Activated CD8-positive, alpha-beta T cell treated with anti-CD3 and anti-CD28 coated beads for 36 hours (primary cell): ENCODE measurements at regions of chr20 and their contacts with region 1.

Region 1: GRCh38 chr20:45771182-45771759 is 20.4 kb downstream of the WFDC3 start:
- DNase-seq: peak; percentile 87
- ATAC-seq: peak; percentile 85
- H3K4me3 Mint-ChIP-seq: no peak overlapping the region
- H3K27ac Mint-ChIP-seq: no peak overlapping the region
- H3K4me1 Mint-ChIP-seq: peaks cover 6% of the 10 kb centered on the region
- H3K27me3 Mint-ChIP-seq: peaks cover 8% of the 10 kb centered on the region
- CTCF ChIP-seq: peak; percentile 85

Region 2: GRCh38 chr20:45293041-45294002 is 477.9 kb before region 1 on chr20:
- CTCF ChIA-PET with region 1: interaction called, 12 read pairs
- POLR2A ChIA-PET with region 1: interaction called, 3 read pairs
- intact Hi-C with region 1: no loop called
- DNase-seq: peak; percentile 91
- ATAC-seq: peak; percentile 92
- H3K4me3 Mint-ChIP-seq: peak overlapping the region; percentile 69
- H3K27ac Mint-ChIP-seq: no peak overlapping the region
- H3K4me1 Mint-ChIP-seq: peaks cover 2% of the 10 kb centered on the region
- H3K27me3 Mint-ChIP-seq: peaks cover 31% of the 10 kb centered on the region
- CTCF ChIP-seq: peak; percentile 98

Region 3: GRCh38 chr20:45373353-45374100 is 397.7 kb before region 1 on chr20:
- CTCF ChIA-PET with region 1: interaction called, 17 read pairs
- POLR2A ChIA-PET with region 1: no interaction called
- intact Hi-C with region 1: no loop called
- DNase-seq: peak; percentile 93
- ATAC-seq: peak; percentile 93
- H3K4me3 Mint-ChIP-seq: peak overlapping the region; percentile 77
- H3K27ac Mint-ChIP-seq: peak overlapping the region; percentile 83
- H3K4me1 Mint-ChIP-seq: peaks cover 29% of the 10 kb centered on the region
- H3K27me3 Mint-ChIP-seq: no peaks in the 10 kb centered on the region
- CTCF ChIP-seq: peak; percentile 96

Region 4: DNA sequence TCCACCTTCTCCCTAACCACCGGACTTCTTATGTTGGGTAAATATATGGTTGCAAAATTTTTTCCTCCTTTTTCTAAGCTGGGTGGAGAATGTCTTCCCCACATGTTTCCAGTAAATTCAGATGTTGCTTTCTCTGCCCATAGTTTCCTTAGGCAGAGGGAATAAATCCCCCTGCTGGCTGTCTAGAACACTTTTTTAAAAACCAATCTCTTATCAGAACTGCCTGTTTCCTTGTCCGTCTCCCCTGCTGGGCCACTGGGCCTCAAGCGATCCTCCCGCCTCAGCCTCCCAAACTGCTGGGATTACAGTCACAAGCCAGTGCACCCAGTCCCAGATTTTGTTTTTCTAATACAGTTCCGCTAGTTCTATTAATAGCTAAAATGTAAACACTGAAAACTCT is 311.7 kb before region 1 on chr20:
- CTCF ChIA-PET with region 1: interaction called, 53 read pairs
- POLR2A ChIA-PET with region 1: no interaction called
- intact Hi-C with region 1: no loop called
- DNase-seq: no peak
- ATAC-seq: no peak
- H3K4me3 Mint-ChIP-seq: no peak overlapping the region
- H3K27ac Mint-ChIP-seq: no peak overlapping the region
- H3K4me1 Mint-ChIP-seq: peaks cover 4% of the 10 kb centered on the region
- H3K27me3 Mint-ChIP-seq: no peaks in the 10 kb centered on the region
- CTCF ChIP-seq: no peak

Region 5: GRCh38 chr20:45545754-45546453 is 225.4 kb before region 1 on chr20:
- CTCF ChIA-PET with region 1: interaction called, 13 read pairs
- POLR2A ChIA-PET with region 1: no interaction called
- intact Hi-C with region 1: no loop called
- DNase-seq: no peak
- ATAC-seq: no peak
- H3K4me3 Mint-ChIP-seq: no peak overlapping the region
- H3K27ac Mint-ChIP-seq: no peak overlapping the region
- H3K4me1 Mint-ChIP-seq: no peaks in the 10 kb centered on the region
- H3K27me3 Mint-ChIP-seq: peaks cover 33% of the 10 kb centered on the region
- CTCF ChIP-seq: peak; percentile 25

Region 6: DNA sequence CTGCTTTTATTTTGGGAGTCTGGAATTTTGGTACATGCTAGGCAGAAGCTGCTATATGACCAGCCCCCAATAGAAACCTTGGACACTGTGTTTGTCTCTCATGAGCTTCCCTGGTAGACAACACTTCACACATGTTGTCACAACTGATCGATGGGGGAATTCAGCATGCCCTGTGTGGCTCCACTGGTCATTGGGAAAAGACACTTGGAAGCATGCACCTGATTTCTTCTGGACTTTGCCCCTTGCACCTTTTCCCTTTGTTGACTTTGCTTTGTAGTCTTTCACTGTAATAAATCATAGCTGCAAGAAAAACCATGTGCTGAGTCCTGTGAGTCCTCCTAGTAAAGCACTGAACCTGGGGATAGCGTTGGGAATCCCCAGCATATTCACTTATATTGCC is 149.7 kb before region 1 on chr20:
- CTCF ChIA-PET with region 1: interaction called, 66 read pairs
- POLR2A ChIA-PET with region 1: no interaction called
- intact Hi-C with region 1: no loop called
- DNase-seq: no peak
- ATAC-seq: no peak
- H3K4me3 Mint-ChIP-seq: no peak overlapping the region
- H3K27ac Mint-ChIP-seq: no peak overlapping the region
- H3K4me1 Mint-ChIP-seq: no peaks in the 10 kb centered on the region
- H3K27me3 Mint-ChIP-seq: peaks cover 12% of the 10 kb centered on the region
- CTCF ChIP-seq: no peak

Region 7: GRCh38 chr20:45792332-45792686 is 21.0 kb after region 1 on chr20:
- CTCF ChIA-PET with region 1: interaction called, 15 read pairs
- POLR2A ChIA-PET with region 1: no interaction called
- intact Hi-C with region 1: no loop called
- DNase-seq: peak; percentile 19
- ATAC-seq: peak; percentile 4
- H3K4me3 Mint-ChIP-seq: peak overlapping the region; percentile 80
- H3K27ac Mint-ChIP-seq: peak overlapping the region; percentile 93
- H3K4me1 Mint-ChIP-seq: peaks cover 15% of the 10 kb centered on the region
- H3K27me3 Mint-ChIP-seq: no peaks in the 10 kb centered on the region
- CTCF ChIP-seq: no peak

Region 8: GRCh38 chr20:45985516-45985941 is 214.3 kb after region 1 on chr20:
- CTCF ChIA-PET with region 1: no interaction called
- POLR2A ChIA-PET with region 1: no interaction called
- intact Hi-C with region 1: no loop called
- DNase-seq: no peak
- ATAC-seq: no peak
- H3K4me3 Mint-ChIP-seq: no peak overlapping the region
- H3K27ac Mint-ChIP-seq: no peak overlapping the region
- H3K4me1 Mint-ChIP-seq: peaks cover 3% of the 10 kb centered on the region
- H3K27me3 Mint-ChIP-seq: peaks cover 12% of the 10 kb centered on the region
- CTCF ChIP-seq: no peak